Heart left ventricle (tissue), 16 donors: ENCODE measurements at regions of chr11 and their contacts with region 1.

Region 1: DNA sequence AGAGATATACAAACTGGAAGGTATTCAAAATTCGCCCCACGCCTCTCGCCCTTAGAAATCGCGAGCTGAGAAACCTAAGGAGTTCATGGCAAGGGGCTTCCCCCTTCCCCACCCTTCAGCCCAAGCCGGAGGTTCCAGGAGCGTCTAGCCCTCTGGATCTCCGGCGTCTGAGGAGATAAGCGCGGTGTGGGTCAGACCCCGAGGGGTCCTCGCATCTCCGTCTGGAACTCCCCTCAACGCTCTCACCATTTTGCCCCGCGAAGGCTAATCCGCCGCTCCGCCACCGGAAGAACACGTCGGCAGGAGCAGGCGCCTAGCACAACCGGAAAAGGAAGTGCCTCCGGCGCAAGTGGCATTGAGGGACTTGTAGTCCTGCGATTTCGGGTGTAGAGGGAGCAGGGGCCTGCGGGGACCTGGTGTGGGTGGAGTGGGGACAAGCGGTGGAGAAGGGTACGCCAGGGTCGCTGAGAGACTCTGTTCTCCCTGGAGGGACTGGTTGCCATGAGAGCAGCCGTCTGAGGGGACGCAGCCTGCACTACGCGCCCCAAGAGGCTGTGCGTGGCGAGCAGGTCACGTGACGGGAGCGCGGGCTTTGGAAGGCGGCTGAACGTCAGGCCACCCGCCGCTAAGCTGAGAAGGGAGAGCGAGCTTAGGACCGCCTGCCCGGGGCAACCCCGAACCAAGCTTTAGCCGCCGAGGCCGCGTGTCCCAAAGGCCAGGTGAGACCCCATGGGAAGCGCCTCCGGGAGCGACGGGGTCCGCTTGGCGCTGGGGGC is at the starts of genes FEN1 and TMEM258:
- DNase-seq: peak; percentile 89 to 94 (median 93)
- ATAC-seq: peak; percentile 88 to 94 (median 93)
- H3K4me3 ChIP-seq: peak within 1 kb of the TSS; percentile 62 to 92 (median 72)
- H3K27ac ChIP-seq: peak within 1 kb of the TSS; percentile 89 to 99 (median 96)
- H3K4me1 ChIP-seq: peaks cover 6 to 26% (median 19%) of the 10 kb centered on the region in 12 donors
- H3K27me3 ChIP-seq: no peaks in the 10 kb centered on the region
- CTCF ChIP-seq: peak in 2 of 12 donors; percentile 8 to 10
- POLR2A ChIP-seq: peak in 1 of 2 donors; percentile 62
- total RNA-seq, gene FEN1: 3.9 to 13.7 (median 6.8) TPM
- total RNA-seq, gene TMEM258: 48.0 to 129 (median 103) TPM

Region 2: DNA sequence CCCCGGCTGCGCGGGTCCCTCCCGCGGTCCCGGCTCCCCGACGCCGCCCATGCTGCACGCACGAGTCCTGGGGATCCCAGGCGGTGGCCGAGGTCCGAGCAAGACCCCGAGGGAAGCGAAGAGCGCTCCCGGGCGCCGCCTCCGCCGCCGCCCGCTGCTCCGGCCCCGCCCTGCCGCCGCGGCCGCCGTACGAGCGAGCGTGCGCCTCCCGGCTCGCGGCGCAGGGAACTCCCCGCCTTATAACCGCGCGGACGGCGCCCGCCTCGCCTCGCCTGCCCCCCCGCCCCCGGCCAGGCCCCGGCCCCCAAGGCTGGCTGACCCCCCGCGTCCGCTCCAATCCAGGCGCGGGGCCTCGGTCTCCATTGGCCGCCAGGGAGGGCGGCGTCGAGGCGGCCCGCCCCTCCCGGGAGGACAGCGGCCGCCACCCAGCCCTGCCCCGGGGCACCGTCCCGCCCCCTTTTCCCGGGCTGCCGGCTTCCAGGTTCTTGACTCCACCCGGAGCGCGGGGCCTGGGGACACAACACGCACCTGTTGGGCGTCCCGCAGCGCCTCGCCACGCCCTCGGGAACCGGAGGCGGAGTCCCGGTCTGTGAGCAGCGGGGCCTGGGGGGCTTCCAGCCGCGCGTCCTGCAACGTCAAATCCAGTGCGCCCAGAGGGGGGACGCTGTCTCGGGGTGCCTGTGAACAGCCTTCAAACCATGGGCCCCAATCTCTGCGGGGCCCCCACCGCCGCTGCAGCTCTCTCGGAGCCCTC is 99.0 kb after region 1 on chr11 and contains the start of gene FADS3:
- intact Hi-C with region 1: loop called in 9 of 10 experiments (anchors 2 to 5 kb)
- DNase-seq: peak; percentile 91 to 95 (median 93)
- ATAC-seq: peak; percentile 76 to 91 (median 86)
- H3K4me3 ChIP-seq: peak within 1 kb of the TSS; percentile 67 to 98 (median 94)
- H3K27ac ChIP-seq: peak within 1 kb of the TSS; percentile 68 to 97 (median 93)
- H3K4me1 ChIP-seq: peaks cover 15 to 55% (median 41%) of the 10 kb centered on the region in 12 donors
- H3K27me3 ChIP-seq: no peaks in the 10 kb centered on the region
- CTCF ChIP-seq: peak in 1 of 12 donors; percentile 4
- POLR2A ChIP-seq: peak in 1 of 2 donors; percentile 86
- total RNA-seq, gene FADS3: 53.2 to 147 (median 79.6) TPM

Region 3: DNA sequence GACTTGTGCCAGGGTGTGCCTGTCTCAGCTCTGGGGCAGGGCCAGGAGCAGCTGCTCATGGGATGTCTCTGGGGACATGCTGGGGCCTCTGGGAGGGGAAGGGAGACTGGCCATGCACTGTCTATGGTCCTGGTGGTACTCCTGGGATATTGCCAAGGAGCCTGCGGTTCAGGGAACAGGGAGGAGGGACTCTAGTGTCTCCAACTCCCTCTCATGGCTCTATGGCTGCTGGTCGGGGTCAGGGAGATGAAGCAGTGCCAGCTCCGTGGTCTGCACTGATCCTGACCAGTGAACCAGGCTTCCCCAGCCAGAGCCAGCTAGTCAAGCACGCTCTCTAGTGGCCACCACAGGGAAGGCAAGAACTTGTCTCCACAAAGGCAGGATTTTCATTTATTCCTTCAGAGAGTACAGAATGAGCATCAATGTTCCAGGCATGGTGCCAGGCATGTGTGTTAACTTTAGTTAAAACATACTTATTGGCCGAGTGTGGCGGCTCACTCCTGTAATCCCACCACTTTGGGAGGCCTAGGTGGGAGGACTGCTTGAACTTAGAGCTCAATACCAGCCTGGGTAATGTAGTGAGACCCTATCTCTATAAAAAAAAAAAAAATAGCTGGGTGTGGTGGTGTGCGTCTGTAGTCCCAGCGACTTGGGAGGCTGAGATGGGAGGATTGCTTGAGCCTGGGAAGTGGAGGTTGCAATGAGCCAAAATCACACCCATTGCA is 155.2 kb after region 1 on chr11:
- intact Hi-C with region 1: loop called in 9 of 10 experiments (anchors 1 to 5 kb)
- DNase-seq: peak; percentile 85 to 93 (median 87)
- ATAC-seq: peak; percentile 57 to 87 (median 82)
- H3K4me3 ChIP-seq: no peak overlapping the region
- H3K27ac ChIP-seq: no peak overlapping the region
- H3K4me1 ChIP-seq: peaks cover 0 to 29% (median 11%) of the 10 kb centered on the region in 12 donors
- H3K27me3 ChIP-seq: no peaks in the 10 kb centered on the region
- CTCF ChIP-seq: peak; percentile 87 to 98 (median 93)
- POLR2A ChIP-seq: no peak

Region 4: GRCh38 chr11:62081378-62082291 is 289.1 kb after region 1 on chr11:
- intact Hi-C with region 1: loop called in 7 of 10 experiments (anchors 1 to 10 kb)
- DNase-seq: peak; percentile 72 to 88 (median 81)
- ATAC-seq: peak; percentile 61 to 89 (median 83)
- H3K4me3 ChIP-seq: peak overlapping the region in 1 of 12 donors; percentile 18
- H3K27ac ChIP-seq: no peak overlapping the region
- H3K4me1 ChIP-seq: peaks cover 0 to 11% (median 0%) of the 10 kb centered on the region in 12 donors
- H3K27me3 ChIP-seq: no peaks in the 10 kb centered on the region
- CTCF ChIP-seq: peak; percentile 82 to 97 (median 93)
- POLR2A ChIP-seq: no peak

Region 5: DNA sequence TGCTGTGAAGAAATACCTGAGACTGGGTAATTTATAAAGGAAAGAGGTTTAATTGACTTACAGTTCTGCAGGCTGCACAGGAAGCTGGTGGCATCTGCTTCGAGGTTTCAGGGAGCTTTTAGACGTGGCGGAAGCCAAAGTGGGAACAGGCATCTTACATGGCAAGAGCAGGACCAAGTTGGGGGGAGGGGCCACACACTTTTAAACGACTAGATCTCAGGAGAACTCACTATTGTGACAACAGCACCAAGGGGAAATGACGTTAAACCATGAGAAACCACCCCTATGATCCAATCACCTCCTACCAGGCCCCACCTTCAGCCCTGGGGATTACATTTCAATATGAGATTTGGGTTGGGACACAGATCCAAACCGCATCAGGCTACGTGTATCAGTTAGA is 517.5 kb after region 1 on chr11:
- intact Hi-C with region 1: loop called in 1 of 10 experiments (anchors 5 kb)
- DNase-seq: no peak
- ATAC-seq: no peak
- H3K4me3 ChIP-seq: no peak overlapping the region
- H3K27ac ChIP-seq: no peak overlapping the region
- H3K4me1 ChIP-seq: peaks cover 0 to 10% (median 0%) of the 10 kb centered on the region in 12 donors
- H3K27me3 ChIP-seq: peaks cover 0 to 62% (median 0%) of the 10 kb centered on the region in 9 donors
- CTCF ChIP-seq: no peak
- POLR2A ChIP-seq: no peak